MCF 10A (cell line): ENCODE measurements at regions of chr12 and their contacts with region 1.

Region 1: DNA sequence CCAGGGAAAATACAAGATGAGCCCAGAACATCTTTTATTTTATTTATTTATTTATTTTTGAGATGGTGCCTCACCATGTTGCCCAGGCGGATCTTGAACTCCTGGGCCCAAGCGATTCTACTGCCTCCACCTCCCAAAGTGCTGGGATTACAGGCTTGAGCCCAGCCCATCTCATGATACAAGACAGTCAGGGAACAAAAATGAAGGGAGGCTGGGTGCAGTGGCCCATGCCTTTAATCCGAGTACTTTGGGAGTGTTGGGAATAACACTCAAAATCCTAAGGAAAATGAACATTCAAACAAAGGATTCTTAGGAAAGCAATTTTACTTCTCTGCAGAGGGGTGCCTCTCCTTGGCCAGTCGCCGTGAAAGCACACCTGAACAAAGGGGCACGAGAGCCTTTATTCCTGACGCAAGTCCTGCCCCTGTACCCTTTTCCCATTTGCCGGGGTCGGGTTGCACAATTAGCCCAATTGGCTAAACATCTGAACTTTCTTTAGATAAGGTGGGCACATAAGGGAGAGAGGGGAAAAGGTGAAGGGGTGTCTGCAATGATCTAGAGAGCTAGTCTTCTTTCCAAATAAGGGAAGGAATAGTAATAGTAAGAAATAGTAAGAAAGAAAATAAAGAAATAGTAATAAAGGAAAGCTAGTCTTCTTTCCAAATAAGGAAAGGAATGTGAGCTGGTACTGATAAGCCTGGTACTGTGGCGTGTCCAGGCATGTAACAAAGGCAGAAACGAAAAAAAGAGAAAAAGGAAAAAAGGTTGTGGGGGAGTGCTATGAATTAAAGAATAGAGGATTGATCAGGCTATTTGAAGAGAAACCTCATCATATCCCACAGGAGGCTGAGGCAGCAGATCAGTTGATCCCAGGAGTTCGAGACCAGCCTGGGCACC is 13.4 kb downstream of the NCAPD2 start:
- DNase-seq: peak; percentile 6
- H3K4me3 Mint-ChIP-seq: peak overlapping the region; percentile 43
- H3K27ac Mint-ChIP-seq: peak overlapping the region; percentile 95
- H3K4me1 Mint-ChIP-seq: peaks cover 8% of the 10 kb centered on the region
- H3K27me3 Mint-ChIP-seq: no peaks in the 10 kb centered on the region
- CTCF ChIP-seq: no peak

Region 2: GRCh38 chr12:6423267-6424007 is 83.9 kb before region 1 on chr12:
- CTCF ChIA-PET with region 1: no interaction called
- POLR2A ChIA-PET with region 1: no interaction called
- intact Hi-C with region 1: no loop called
- DNase-seq: peak; percentile 96
- H3K4me3 Mint-ChIP-seq: no peak overlapping the region
- H3K27ac Mint-ChIP-seq: no peak overlapping the region
- H3K4me1 Mint-ChIP-seq: peaks cover 5% of the 10 kb centered on the region
- H3K27me3 Mint-ChIP-seq: no peaks in the 10 kb centered on the region
- CTCF ChIP-seq: peak; percentile 88

Region 3: GRCh38 chr12:6493497-6494257 is 13.7 kb before region 1 on chr12 and contains the start of gene NCAPD2:
- CTCF ChIA-PET with region 1: no interaction called
- POLR2A ChIA-PET with region 1: interaction called, 11 read pairs
- intact Hi-C with region 1: no loop called
- DNase-seq: peak; percentile 96
- H3K4me3 Mint-ChIP-seq: peak within 1 kb of the TSS; percentile 95
- H3K27ac Mint-ChIP-seq: peak within 1 kb of the TSS; percentile 98
- H3K4me1 Mint-ChIP-seq: peaks cover 21% of the 10 kb centered on the region
- H3K27me3 Mint-ChIP-seq: no peaks in the 10 kb centered on the region
- CTCF ChIP-seq: no peak
- total RNA-seq, gene NCAPD2: 31.9 and 52.0 TPM in 2 replicates

Region 4: GRCh38 chr12:7129872-7130680 is 622.7 kb after region 1 on chr12 and contains the start of gene CLSTN3:
- CTCF ChIA-PET with region 1: no interaction called
- POLR2A ChIA-PET with region 1: no interaction called
- intact Hi-C with region 1: no loop called
- DNase-seq: peak; percentile 51
- H3K4me3 Mint-ChIP-seq: peak within 1 kb of the TSS; percentile 72
- H3K27ac Mint-ChIP-seq: peak within 1 kb of the TSS; percentile 33
- H3K4me1 Mint-ChIP-seq: peaks cover 17% of the 10 kb centered on the region
- H3K27me3 Mint-ChIP-seq: no peaks in the 10 kb centered on the region
- CTCF ChIP-seq: no peak
- total RNA-seq, gene CLSTN3: 34.6 and 40.2 TPM in 2 replicates